Aorta (tissue), 5 donors: ENCODE measurements at regions of chr1 and their contacts with region 1.

Region 1: DNA sequence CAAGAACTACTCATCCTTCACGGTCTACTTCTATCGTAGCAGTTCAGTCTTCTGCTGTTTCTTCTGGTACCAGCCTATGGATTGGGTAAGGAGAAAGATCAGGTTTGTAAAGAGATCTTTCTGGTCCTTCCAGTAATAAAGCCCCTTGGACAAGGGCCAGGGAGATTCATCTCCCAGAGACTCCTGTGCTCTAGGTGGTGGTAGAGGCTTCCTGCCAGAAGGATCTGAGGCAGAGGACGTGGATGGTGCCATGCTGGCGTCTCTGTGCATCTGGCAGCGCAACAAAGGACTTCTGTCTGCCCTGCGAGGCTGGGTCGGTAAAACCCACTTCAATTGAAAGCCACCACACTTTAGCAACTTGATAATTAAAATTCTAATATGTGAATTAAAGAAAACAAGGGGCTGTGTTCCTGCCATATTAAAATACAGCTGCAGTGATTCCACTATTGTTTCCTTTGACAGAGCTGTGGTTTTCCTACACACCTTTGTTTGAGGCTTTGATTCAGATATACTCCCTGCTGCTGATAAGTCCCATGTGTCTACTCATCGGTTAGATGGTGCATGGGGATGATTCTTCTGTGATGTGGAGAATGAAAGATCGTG is 73.6 kb downstream of the ROR1 start:
- DNase-seq: no peak
- ATAC-seq: no peak
- H3K4me3 ChIP-seq: no peak overlapping the region
- H3K27ac ChIP-seq: no peak overlapping the region
- H3K4me1 ChIP-seq: peaks cover 2 to 6% of the 10 kb centered on the region in 2 donors
- H3K27me3 ChIP-seq: no peaks in the 10 kb centered on the region

Region 2: GRCh38 chr1:63892632-63893395 is 45.4 kb after region 1 on chr1:
- intact Hi-C with region 1: loop called in 1 of 2 experiments (anchors 10 kb)
- DNase-seq: peak in 1 of 2 donors; percentile 49
- ATAC-seq: peak; percentile 80
- H3K4me3 ChIP-seq: no peak overlapping the region
- H3K27ac ChIP-seq: peak overlapping the region; percentile 61 to 90
- H3K4me1 ChIP-seq: peaks cover 6 to 8% of the 10 kb centered on the region in 2 donors
- H3K27me3 ChIP-seq: no peaks in the 10 kb centered on the region

Region 3: DNA sequence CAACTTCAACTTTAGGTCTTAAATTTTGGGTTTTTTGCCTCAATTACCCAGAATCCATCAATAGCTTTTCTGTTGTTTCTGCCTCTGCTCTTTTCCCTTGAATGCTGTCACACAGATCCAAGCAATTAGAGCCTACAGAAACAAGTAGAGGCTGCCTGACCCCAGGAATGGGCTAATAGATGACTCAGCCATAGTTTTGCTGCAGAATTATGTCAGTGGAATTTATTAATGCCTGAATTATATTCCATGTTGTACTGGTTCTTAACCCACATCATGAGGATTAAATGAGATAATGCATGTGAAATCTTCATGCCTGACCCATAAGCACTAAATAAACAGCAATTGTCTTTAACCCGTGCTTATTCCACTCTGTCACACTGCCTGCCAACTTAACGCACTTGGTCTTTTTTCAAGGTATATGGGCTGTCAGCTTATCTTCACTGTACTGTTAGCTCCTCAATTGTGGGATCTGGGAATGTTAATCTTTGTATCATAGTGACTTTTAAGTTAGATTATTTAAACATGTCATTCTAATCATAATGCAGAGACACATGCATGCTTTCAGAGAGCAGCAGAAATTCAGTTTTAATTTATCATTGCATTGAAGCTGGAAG is 139.7 kb after region 1 on chr1:
- intact Hi-C with region 1: no loop called
- DNase-seq: no peak
- ATAC-seq: no peak
- H3K4me3 ChIP-seq: no peak overlapping the region
- H3K27ac ChIP-seq: peak overlapping the region in 1 of 2 donors; percentile 28
- H3K4me1 ChIP-seq: peaks cover 14 to 15% of the 10 kb centered on the region in 2 donors
- H3K27me3 ChIP-seq: no peaks in the 10 kb centered on the region